ENCODE measurements at regions of chr10 and their contacts with region 1.

Region 1: DNA sequence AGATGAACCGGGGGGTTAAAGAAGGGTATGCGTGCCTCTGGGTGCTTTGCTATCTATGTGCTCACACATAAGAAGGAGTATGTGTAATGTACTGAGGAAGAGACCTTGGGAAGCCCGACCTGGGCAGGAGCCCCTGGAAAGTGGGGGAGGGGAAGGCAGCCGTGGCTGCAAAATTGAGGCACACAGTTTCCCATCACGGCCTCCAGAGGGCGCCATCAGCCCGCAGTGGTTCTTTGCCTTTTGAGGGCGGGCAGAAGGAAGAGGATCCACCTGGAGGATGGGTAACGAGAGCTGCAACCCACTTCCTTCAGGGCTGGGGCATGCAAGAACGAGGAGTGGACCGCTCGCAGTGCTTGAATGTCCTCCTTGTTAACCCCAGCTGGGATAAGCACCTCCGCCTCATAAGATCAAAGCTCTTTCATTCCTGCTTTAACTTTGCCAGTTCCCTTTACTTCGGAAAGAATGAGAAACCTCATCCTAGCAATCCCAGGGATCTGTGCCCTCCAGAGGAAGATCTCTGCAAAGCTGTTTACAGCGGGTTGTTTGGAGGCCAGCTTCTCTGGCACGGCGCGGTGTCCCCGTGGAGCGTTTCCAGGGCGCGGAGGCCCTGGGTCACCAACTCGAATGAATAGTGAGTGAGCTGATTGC is 77.9 kb downstream of the PCGF5 start:
- DNase-seq: no peak
- H3K4me3 ChIP-seq: peak overlapping the region; percentile 30
- H3K27me3 ChIP-seq: no peaks in the 10 kb centered on the region
- CTCF ChIP-seq: peak; percentile 95

Region 2: DNA sequence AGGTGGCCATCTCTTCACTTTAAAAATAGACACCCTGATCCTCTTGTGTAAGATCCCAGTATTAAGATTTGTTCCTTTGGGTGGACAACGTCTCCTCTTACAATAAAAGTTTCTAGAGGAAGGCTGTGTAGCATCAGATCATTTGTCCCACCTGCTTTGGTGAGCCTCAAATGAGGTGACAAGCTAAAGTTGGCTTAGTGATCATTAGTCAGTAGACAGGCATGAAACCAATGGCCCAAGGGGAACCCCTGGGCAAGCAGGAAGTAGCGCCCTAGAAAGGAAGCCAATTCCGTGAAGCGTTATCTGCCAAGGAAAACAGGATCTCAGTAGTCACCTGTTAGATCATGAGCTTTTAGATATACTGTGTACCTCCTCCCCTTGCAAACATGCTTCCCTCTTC is 11.1 kb before region 1 on chr10:
- CTCF ChIA-PET with region 1: interaction called, 56 read pairs
- POLR2A ChIA-PET with region 1: no interaction called
- DNase-seq: no peak
- H3K4me3 ChIP-seq: no peak overlapping the region
- H3K27me3 ChIP-seq: no peaks in the 10 kb centered on the region
- CTCF ChIP-seq: no peak

Region 3: DNA sequence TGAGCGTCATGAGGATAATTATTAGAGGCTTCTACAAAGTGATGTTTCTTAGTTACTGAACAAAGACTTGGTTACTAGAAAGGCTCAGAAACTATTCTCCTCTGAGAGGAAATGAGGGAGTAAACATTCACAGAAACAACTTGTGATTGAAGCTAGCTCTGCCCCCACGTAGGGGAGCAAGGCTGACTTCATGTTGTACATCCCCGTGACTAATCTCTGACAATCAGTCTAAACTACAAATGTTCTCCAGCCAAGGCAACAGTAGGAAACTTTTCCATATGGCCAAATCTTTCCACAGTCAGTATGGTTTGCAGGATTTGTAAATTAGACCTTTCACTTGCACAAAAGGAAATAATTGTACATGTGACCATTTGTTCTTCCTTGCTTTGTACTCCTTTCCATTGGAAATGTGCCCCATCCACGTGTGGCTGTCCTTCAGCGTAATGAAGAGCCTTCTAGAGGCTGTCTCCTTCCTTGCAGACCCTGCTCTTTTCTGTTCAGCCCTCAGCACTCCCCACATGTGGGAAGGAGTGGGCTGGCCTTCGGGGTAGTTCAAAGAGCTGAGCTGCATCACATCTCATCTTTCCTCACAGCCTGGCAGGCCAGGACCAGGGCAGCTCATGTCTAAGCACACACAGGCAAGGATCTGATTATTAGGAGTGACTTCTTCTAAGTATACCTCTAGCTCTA is 15.6 kb after region 1 on chr10:
- CTCF ChIA-PET with region 1: interaction called, 57 read pairs
- POLR2A ChIA-PET with region 1: no interaction called
- DNase-seq: no peak
- H3K4me3 ChIP-seq: no peak overlapping the region
- H3K27me3 ChIP-seq: peaks cover 4% of the 10 kb centered on the region
- CTCF ChIP-seq: no peak

Region 4: DNA sequence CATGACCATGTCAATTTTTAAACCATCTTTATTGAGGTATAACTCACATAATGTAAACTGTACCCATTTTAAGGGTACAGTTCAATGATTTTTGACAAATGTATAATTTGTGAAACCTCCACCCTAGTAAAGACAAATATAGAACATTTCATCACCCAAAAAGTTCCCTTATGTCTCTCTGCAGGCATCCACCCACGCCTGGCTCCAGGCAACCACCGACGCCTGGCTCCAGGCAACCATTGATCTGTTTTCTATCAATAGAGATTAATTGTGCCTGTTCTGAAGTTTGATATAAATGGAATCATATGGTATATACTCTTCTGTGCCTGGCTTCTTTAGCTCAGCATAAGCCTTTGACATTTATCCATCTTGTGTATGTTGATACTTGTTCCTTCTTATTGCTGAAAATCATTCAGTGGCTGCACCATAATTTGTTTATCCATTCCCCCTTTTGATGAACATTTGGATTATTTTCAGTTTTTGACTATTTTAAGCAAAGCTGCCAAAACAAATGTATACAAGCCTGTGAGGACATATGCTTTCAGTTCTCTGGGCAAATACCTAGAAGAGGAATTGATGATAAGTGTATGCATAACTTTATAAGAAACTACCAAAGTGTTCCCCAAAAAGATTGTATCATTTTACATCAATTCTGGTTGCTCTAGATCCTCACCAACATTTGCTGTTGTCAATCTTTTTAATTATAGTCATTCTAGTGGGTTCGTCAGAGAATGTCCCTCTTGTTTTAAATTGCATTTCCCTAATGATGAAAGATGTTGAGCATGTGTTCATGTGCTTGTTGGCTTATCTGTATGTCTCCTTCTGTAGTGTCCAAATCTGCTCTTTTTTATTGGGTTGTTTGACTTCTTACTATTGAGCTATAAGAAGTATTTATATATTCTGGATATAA is 56.1 kb after region 1 on chr10:
- CTCF ChIA-PET with region 1: interaction called, 13 read pairs
- POLR2A ChIA-PET with region 1: no interaction called
- DNase-seq: no peak
- H3K4me3 ChIP-seq: no peak overlapping the region
- H3K27me3 ChIP-seq: peaks cover 2% of the 10 kb centered on the region; the same call in 1 of the 2 replicates
- CTCF ChIP-seq: no peak

Region 5: DNA sequence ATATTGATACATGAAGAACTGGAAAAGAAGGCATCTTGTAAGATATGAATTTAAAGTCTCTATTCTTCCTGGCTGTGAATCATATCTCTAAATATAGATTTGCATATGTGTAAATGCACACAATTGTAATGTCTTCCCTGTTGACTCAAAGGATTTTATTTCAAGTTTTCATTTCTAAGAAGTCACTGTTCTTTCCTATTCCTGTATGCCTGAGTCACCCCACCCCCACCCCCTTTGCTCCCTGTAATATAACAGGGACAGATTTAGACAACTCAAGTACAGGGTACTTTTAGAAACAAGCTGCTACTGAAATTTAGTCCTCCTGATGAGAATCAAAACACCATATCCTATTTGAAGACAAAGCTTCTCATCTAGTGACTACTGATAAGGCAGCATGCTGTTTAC is 68.8 kb after region 1 on chr10:
- CTCF ChIA-PET with region 1: interaction called, 54 read pairs
- POLR2A ChIA-PET with region 1: no interaction called
- DNase-seq: no peak
- H3K4me3 ChIP-seq: no peak overlapping the region
- H3K27me3 ChIP-seq: no peaks in the 10 kb centered on the region; the same call in 1 of the 2 replicates
- CTCF ChIP-seq: no peak

Region 6: GRCh38 chr10:91378061-91378460 is 79.7 kb after region 1 on chr10:
- CTCF ChIA-PET with region 1: interaction called, 14 read pairs
- POLR2A ChIA-PET with region 1: no interaction called
- DNase-seq: no peak
- H3K4me3 ChIP-seq: no peak overlapping the region
- H3K27me3 ChIP-seq: peaks cover 17% of the 10 kb centered on the region
- CTCF ChIP-seq: no peak

Region 7: DNA sequence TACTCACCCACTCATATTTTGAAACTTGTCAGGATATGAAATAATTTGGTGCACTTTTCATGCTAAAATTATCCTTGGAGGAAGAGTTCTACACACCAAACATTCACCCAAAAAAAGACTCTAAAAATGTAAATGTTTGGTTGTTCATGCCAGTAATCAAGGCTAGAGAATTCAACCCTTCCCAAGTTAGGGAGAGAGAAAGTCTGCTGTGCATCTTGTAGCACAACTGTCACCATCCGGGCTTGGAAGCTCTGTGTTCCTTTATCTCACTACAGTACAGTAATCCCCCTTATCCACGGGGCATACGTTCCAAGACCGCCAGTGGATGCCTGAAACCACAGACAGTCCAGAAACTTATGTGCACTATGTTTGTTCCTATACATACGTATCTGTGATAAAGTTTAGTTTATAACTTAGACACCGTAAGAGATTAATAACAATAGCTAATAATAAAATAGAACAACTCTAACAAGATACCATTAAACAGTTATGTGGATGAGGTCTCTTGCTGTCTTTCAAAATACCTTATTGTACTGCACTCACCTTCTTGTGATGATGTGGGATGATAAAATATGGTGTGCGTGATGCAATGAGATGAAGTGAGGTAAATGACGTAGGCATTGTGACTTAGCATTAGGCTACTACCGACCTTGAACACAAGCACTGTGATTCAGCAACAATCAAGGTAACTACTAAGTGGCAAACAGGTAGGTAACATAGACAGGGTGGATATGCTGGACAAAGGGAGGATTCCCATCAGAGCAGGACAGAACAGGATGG is 87.1 kb after region 1 on chr10:
- CTCF ChIA-PET with region 1: interaction called, 22 read pairs
- POLR2A ChIA-PET with region 1: no interaction called
- DNase-seq: no peak
- H3K4me3 ChIP-seq: no peak overlapping the region
- H3K27me3 ChIP-seq: peaks cover 18% of the 10 kb centered on the region
- CTCF ChIP-seq: no peak

Measured in BJ (cell line).